WTC11 (cell line): ENCODE measurements at regions of chr19 and their contacts with region 1.

Region 1: DNA sequence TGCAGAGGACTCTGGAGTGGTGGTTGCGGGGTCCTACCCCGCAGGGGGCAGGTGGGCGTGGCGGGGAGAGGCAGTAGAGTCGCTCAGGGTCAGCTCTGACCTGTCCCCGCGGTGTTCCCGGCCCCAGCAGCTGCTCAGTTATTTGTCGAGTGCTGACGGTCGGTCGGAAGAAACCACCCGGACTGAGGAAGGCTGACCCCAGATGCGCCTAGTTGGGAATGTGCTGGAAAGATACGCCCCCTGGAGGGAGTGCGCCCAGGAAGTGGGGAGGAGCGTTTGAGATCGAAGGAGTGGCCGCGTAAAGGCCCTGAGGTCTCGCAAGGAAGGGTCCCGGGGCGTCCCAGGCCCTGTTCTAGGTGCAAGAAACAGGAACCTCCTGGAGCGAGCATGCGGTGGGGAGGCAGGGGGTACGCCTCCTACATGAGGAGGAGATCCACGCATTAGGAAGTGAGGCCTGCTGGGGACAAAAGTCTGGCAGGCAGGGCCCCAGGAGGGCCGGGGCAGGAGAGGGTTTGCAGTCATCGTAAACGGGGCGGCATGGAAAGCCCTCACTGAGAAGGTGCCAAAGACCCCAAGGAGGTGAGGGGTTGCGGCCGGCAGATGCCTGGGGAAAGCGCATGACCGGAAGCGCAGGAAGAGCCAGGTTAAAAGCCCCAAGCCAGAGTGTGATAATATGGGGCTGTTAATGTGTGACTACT is 9.2 kb downstream of the CCDC8 start:
- DNase-seq: no peak
- ATAC-seq: peak; percentile 20
- H3K4me3 Mint-ChIP-seq: peak overlapping the region; percentile 77
- H3K27ac Mint-ChIP-seq: peak overlapping the region; percentile 1
- H3K4me1 Mint-ChIP-seq: peaks cover 57% of the 10 kb centered on the region
- H3K27me3 Mint-ChIP-seq: peaks cover 40% of the 10 kb centered on the region
- CTCF ChIP-seq: no peak; the same call in 1 of the 2 replicates

Region 2: GRCh38 chr19:46474211-46474610 is 70.0 kb after region 1 on chr19:
- CTCF ChIA-PET with region 1: interaction called, 14 read pairs
- POLR2A ChIA-PET with region 1: no interaction called
- DNase-seq: no peak
- ATAC-seq: no peak
- H3K4me3 Mint-ChIP-seq: no peak overlapping the region
- H3K27ac Mint-ChIP-seq: no peak overlapping the region
- H3K4me1 Mint-ChIP-seq: peaks cover 21% of the 10 kb centered on the region
- H3K27me3 Mint-ChIP-seq: peaks cover 21% of the 10 kb centered on the region
- CTCF ChIP-seq: no peak

Region 3: GRCh38 chr19:46487802-46488445 is 83.7 kb after region 1 on chr19:
- CTCF ChIA-PET with region 1: interaction called, 47 read pairs
- POLR2A ChIA-PET with region 1: interaction called, 5 read pairs
- DNase-seq: peak; percentile 91
- ATAC-seq: peak; percentile 66
- H3K4me3 Mint-ChIP-seq: peak overlapping the region; percentile 76
- H3K27ac Mint-ChIP-seq: no peak overlapping the region
- H3K4me1 Mint-ChIP-seq: peaks cover 38% of the 10 kb centered on the region
- H3K27me3 Mint-ChIP-seq: peaks cover 73% of the 10 kb centered on the region
- CTCF ChIP-seq: peak; percentile 74

Region 4: GRCh38 chr19:46571531-46571930 is 167.3 kb after region 1 on chr19:
- CTCF ChIA-PET with region 1: no interaction called
- POLR2A ChIA-PET with region 1: no interaction called
- DNase-seq: peak; percentile 61
- ATAC-seq: peak; percentile 100
- H3K4me3 Mint-ChIP-seq: no peak overlapping the region
- H3K27ac Mint-ChIP-seq: no peak overlapping the region
- H3K4me1 Mint-ChIP-seq: peaks cover 6% of the 10 kb centered on the region; the same call in 1 of the 2 replicates
- H3K27me3 Mint-ChIP-seq: peaks cover 10% of the 10 kb centered on the region
- CTCF ChIP-seq: no peak